ENCODE measurements at regions of chr1 and their contacts with region 1.

Region 1: GRCh38 chr1:11645670-11646265 is 8.5 kb downstream of the FBXO2 start:
- DNase-seq: peak; percentile 87
- ATAC-seq: peak; percentile 52
- H3K4me3 Mint-ChIP-seq: no peak overlapping the region
- H3K27ac Mint-ChIP-seq: no peak overlapping the region
- H3K4me1 Mint-ChIP-seq: peaks cover 17% of the 10 kb centered on the region
- H3K27me3 Mint-ChIP-seq: peaks cover 10% of the 10 kb centered on the region

Region 2: GRCh38 chr1:11248155-11248554 is 397.6 kb before region 1 on chr1:
- CTCF ChIA-PET with region 1: interaction called, 42 read pairs
- DNase-seq: no peak
- ATAC-seq: no peak
- H3K4me3 Mint-ChIP-seq: no peak overlapping the region
- H3K27ac Mint-ChIP-seq: no peak overlapping the region
- H3K4me1 Mint-ChIP-seq: peaks cover 3% of the 10 kb centered on the region
- H3K27me3 Mint-ChIP-seq: no peaks in the 10 kb centered on the region

Region 3: DNA sequence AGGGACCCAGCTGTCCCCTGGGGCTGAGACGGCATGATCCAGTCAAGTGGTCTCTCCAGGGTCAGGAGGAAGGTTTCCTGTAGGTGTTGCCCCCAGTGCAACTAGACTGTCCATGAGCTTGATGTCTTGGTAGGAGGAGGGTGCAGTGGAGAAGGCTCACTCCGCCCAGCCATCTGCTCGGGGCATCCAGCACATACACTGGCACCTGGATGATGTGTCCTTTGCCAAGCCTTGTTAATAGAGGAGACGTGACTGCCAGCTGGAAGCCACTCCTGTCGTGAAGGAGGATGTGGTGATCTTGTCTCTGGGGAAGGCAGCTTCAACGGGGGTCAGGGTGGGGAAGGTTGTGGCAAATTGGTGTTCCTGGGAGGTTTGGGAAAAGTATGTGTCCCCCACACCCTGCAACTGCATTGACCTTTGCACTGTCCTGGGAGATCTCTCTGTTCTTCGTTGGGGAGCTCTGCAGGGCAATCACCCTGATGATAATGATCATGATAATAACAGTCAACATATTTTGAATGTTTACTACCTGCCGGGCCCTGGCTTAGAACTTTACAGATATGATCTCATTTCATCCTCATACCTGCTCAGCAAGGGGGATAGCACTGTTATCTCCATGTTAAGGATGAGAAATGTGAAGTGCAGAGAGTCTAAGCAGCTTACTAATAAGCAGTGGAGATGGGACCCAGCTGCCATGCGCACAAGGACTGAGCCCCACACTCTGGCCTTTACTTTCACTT is 160.4 kb before region 1 on chr1:
- CTCF ChIA-PET with region 1: no interaction called
- DNase-seq: no peak
- ATAC-seq: no peak
- H3K4me3 Mint-ChIP-seq: no peak overlapping the region
- H3K27ac Mint-ChIP-seq: no peak overlapping the region
- H3K4me1 Mint-ChIP-seq: peaks cover under 1% of the 10 kb centered on the region
- H3K27me3 Mint-ChIP-seq: peaks cover 48% of the 10 kb centered on the region

Region 4: DNA sequence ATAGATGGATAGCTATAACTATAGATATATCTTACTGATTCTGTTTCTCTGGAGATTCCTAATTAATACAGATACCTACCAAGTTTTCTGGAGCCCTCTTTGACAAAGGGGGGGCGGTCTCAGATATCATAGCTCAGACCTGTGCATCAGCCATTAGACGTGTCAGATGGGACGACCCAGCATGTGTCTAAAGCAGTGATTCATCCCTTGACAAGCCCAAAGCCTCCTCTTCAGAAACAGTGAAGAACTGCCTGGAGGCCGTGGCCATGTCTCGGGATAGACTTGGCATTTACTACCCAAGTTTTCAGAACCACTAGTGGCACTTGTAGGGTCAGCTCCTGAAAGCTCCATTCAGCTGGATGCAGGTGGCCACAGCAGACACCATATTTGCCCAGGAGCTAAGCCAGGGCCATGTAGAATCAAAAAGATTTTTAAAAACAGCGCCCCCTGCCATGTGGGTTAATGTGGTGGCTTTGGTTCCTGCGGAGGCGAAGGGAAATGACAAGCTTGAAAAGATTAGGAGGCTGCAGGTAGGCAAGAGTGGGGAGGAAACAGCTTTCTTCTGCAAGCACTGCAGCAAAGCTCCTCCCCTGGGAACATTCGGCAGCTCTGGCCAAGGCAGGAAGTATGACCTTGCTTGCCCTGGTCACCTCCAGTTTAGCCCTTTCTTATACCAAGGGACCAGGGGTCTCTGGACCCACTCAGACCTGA is 73.7 kb before region 1 on chr1:
- CTCF ChIA-PET with region 1: no interaction called
- DNase-seq: no peak
- ATAC-seq: no peak
- H3K4me3 Mint-ChIP-seq: no peak overlapping the region
- H3K27ac Mint-ChIP-seq: no peak overlapping the region
- H3K4me1 Mint-ChIP-seq: no peaks in the 10 kb centered on the region
- H3K27me3 Mint-ChIP-seq: peaks cover 8% of the 10 kb centered on the region

Region 5: DNA sequence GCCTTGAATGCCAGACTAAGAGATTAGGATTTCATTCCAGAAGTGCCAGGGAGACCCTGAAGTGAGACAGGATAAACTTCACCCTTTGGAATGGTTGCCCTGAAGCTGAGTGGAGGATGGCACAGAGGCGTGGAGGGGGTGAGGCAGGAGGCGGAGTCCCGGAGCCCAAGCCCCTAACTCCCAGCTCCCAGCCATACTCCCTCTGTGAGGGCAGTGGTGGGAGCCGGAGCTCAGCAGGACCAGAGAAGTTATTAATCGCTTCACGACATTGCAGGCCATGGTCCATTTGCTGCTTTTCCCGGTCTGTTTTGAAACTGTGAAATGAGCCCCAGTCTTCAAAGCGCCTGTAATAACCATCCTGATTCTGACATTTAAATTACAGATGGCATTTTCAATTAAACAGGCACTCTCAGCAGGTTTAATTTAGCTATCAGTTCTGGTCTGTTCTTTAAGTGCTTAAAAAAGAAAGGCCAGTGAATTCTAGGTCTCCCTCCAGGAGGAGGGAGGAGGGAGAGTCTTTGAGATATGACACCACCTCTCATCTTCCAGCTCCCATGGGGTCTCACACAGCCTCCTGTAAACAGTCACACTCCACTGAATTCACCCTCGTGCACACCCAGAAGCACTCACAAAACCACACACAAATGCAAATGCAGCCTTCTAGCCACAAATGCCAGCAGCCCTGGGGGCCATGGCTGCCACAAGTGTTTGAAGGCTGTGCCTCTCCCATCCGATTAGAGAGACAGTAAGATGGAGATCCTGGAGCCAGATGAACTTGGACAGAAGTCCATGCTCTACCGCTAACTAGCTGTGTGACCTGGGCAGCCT is 11.2 kb before region 1 on chr1:
- CTCF ChIA-PET with region 1: interaction called, 33 read pairs
- DNase-seq: no peak
- ATAC-seq: no peak
- H3K4me3 Mint-ChIP-seq: no peak overlapping the region
- H3K27ac Mint-ChIP-seq: no peak overlapping the region
- H3K4me1 Mint-ChIP-seq: no peaks in the 10 kb centered on the region
- H3K27me3 Mint-ChIP-seq: peaks cover 23% of the 10 kb centered on the region

Region 6: GRCh38 chr1:11661103-11661502 is 15.3 kb after region 1 on chr1:
- CTCF ChIA-PET with region 1: interaction called, 110 read pairs
- DNase-seq: no peak
- ATAC-seq: no peak
- H3K4me3 Mint-ChIP-seq: no peak overlapping the region
- H3K27ac Mint-ChIP-seq: no peak overlapping the region
- H3K4me1 Mint-ChIP-seq: peaks cover 9% of the 10 kb centered on the region
- H3K27me3 Mint-ChIP-seq: no peaks in the 10 kb centered on the region

Region 7: DNA sequence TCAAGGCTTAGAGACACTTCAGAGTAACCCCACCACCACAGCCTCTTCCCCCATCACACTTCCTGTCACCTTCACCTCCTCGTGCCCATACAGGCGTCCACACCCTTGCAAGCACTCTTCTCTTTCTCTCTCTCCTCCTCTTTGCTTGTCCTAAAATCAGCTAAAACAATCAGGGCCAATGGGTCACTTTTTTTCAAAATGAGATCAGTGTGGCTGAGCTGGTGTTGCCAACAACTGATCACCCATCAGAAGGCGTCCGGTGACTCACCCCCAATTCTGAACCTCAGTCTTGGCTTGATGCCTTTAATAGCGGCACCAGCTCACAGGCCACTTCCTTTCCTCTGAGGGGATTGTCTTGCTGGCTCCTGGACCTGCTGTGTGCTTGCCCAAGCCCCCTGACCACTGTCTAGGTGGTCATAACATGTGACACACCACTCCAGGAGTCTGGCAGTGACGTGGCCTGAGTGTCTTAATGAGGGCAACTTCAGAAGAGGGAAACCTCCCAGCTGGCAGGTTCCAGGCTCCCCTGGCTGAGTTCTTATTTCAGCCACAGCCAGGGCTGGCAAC is 47.3 kb after region 1 on chr1:
- CTCF ChIA-PET with region 1: interaction called, 17 read pairs
- DNase-seq: peak; percentile 85
- ATAC-seq: peak; percentile 82
- H3K4me3 Mint-ChIP-seq: peak overlapping the region; percentile 30
- H3K27ac Mint-ChIP-seq: peak overlapping the region; percentile 59
- H3K4me1 Mint-ChIP-seq: peaks cover 30% of the 10 kb centered on the region
- H3K27me3 Mint-ChIP-seq: peaks cover 49% of the 10 kb centered on the region

Region 8: DNA sequence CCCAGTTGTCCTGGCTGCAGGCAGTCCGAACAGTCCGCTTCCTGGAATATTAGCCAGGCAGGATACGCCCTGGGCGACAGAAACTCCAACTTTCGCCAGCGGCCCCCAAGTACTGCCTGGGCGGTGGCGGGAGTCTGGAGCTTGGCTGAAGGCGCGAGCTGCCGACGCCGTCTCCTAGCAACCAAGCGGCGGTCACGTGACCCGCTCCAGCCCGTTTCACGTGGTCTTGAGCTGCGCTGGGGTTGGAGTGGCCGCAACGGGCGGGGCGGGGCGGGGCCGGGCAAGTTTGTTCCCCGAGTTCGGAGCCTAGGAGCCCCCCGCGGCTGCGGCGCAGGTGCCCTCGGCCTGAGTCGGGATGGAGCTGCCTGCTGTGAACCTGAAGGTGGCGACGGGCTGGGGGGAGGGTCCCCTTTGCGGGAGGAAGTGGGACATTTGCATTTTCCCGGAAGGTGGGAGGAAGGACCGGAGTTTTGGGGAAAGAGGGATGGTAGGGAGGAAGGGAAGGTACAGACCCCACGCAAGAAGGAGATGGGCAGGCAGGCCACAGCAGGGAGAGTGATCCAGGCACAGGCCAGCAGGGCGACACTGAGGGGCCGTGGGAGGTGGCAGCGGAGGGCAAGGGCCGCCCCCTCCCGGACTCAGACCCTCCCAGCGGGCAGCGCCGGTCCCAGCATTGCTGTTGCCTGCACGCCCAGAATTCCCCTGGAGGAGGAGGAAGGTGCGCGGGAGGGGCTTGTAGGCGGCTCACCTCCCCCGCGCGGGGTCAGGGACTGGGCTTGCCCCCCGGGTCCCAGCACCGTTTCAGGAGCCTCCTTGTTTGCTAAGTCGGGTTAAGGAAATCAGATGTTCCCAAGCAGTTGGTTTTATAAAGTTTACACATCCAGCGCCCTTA is 90.3 kb after region 1 on chr1 and contains the start of gene AGTRAP:
- CTCF ChIA-PET with region 1: interaction called, 12 read pairs
- DNase-seq: peak; percentile 95
- ATAC-seq: peak; percentile 80
- H3K4me3 Mint-ChIP-seq: peak within 1 kb of the TSS; percentile 93
- H3K27ac Mint-ChIP-seq: peak within 1 kb of the TSS; percentile 87
- H3K4me1 Mint-ChIP-seq: peaks cover 62% of the 10 kb centered on the region
- H3K27me3 Mint-ChIP-seq: no peaks in the 10 kb centered on the region
- total RNA-seq, gene AGTRAP: 45.5 to 59.9 TPM